PC-3 (cell line): ENCODE measurements at regions of chr7 and their contacts with region 1.

Region 1: DNA sequence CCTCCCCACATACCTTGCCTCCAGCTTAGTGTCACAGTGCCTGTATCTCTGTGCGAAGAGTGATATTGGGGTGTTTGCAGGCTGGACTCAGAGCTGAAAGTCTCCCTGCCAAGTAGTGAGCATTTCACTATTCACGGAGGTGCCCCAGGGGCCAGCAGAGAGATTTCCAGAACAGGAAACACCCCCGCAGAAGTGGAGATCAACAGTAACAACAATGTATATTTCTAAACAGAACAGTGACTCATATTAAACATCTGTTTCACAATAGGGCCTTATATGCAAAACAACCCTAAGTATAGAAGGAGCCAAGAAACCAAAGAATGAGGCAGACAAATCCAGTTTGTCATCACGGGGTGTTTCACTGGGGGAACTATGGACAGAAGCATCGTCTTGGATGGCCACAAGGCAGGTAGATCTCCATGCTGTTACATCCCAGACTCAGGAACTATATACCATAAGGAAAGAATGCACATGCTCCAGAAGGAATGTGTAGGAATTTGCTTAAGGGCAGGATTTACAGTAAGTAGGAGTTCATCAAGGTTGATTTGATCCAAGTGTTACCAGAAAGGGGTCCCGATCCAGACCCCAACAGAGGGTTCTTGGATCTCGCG is 29.3 kb upstream of the CCL24 start:
- DNase-seq: peak; percentile 84
- ATAC-seq: peak; percentile 92
- H3K4me3 ChIP-seq: peak overlapping the region; percentile 11; the same call in 1 of the 2 replicates
- H3K27ac ChIP-seq: peak overlapping the region; percentile 55
- H3K4me1 ChIP-seq: peaks cover 15% of the 10 kb centered on the region
- H3K27me3 ChIP-seq: no peaks in the 10 kb centered on the region
- CTCF ChIP-seq: no peak

Region 2: GRCh38 chr7:75662579-75663301 is 180.2 kb before region 1 on chr7:
- CTCF ChIA-PET with region 1: no interaction called
- POLR2A ChIA-PET with region 1: no interaction called
- intact Hi-C with region 1: no loop called
- DNase-seq: no peak
- ATAC-seq: no peak
- H3K4me3 ChIP-seq: no peak overlapping the region
- H3K27ac ChIP-seq: no peak overlapping the region
- H3K4me1 ChIP-seq: no peaks in the 10 kb centered on the region
- H3K27me3 ChIP-seq: no peaks in the 10 kb centered on the region
- CTCF ChIP-seq: no peak

Region 3: GRCh38 chr7:75861636-75862035 is 18.7 kb after region 1 on chr7:
- CTCF ChIA-PET with region 1: no interaction called
- POLR2A ChIA-PET with region 1: no interaction called
- intact Hi-C with region 1: no loop called
- DNase-seq: no peak
- ATAC-seq: no peak
- H3K4me3 ChIP-seq: no peak overlapping the region
- H3K27ac ChIP-seq: no peak overlapping the region
- H3K4me1 ChIP-seq: no peaks in the 10 kb centered on the region
- H3K27me3 ChIP-seq: no peaks in the 10 kb centered on the region
- CTCF ChIP-seq: no peak

Region 4: DNA sequence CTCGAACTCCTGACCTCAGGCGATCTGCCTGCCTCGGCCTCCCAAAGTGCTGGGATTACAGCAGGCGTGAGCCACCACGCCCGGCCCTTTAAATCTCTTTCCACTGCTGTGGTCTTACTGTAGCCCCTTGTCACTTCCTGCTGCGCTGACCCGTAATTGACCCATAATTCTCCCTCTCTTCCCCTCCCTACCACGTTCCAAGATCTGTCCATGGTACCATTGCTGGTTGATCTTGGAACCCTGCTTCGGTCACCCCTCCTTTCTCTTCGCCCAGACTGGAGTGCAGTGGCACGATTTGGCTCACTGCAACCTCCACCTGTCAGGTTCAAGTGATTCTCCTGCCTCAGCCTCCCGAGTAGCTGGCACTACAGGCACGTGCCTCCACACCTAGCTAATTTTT is 78.5 kb after region 1 on chr7:
- CTCF ChIA-PET with region 1: no interaction called
- POLR2A ChIA-PET with region 1: interaction called, 17 read pairs
- intact Hi-C with region 1: no loop called
- DNase-seq: no peak
- ATAC-seq: no peak
- H3K4me3 ChIP-seq: no peak overlapping the region
- H3K27ac ChIP-seq: no peak overlapping the region
- H3K4me1 ChIP-seq: peaks cover 12% of the 10 kb centered on the region
- H3K27me3 ChIP-seq: no peaks in the 10 kb centered on the region
- CTCF ChIP-seq: no peak